ENCODE measurements at regions of chr3 and their contacts with region 1.

Region 1: DNA sequence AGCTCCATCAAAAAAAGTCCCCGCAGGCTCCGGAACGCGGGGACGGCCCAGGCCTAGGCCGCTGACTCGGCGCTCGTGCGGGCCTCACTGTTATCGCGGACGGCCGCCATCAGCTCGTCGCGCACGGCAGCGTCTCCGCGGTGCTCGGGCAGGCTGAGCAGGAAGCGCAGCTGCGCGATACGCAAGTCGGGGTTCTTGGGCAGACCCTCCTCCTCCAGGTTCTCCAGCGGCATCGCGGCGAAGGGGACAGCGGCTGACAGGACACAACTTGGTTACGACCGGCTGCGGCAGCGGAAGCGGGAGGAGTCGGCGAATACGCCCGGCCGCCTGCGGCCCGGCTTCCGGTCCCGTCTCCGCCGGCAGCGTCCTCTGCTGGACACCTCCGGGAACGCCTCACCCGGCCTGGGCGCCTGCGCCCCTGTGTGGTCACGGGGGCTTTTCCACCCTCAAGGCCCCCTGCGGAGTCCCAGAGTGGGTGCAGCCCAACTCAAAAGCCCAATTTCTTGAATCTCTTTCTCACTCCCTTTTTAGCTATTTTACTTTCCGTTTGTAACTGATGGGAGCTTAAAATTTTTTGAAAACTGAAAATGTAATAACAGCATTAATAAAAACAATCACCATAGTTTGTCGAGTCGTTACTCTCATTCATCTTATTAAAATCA is at the start of gene PSMD6:
- DNase-seq: peak; percentile 92
- H3K4me3 Mint-ChIP-seq: peak within 1 kb of the TSS; percentile 85
- H3K27ac Mint-ChIP-seq: peak within 1 kb of the TSS; percentile 83
- H3K4me1 Mint-ChIP-seq: peaks cover 36% of the 10 kb centered on the region
- H3K27me3 Mint-ChIP-seq: peaks cover 5% of the 10 kb centered on the region
- total RNA-seq, gene PSMD6: 101 to 103 TPM

Region 2: DNA sequence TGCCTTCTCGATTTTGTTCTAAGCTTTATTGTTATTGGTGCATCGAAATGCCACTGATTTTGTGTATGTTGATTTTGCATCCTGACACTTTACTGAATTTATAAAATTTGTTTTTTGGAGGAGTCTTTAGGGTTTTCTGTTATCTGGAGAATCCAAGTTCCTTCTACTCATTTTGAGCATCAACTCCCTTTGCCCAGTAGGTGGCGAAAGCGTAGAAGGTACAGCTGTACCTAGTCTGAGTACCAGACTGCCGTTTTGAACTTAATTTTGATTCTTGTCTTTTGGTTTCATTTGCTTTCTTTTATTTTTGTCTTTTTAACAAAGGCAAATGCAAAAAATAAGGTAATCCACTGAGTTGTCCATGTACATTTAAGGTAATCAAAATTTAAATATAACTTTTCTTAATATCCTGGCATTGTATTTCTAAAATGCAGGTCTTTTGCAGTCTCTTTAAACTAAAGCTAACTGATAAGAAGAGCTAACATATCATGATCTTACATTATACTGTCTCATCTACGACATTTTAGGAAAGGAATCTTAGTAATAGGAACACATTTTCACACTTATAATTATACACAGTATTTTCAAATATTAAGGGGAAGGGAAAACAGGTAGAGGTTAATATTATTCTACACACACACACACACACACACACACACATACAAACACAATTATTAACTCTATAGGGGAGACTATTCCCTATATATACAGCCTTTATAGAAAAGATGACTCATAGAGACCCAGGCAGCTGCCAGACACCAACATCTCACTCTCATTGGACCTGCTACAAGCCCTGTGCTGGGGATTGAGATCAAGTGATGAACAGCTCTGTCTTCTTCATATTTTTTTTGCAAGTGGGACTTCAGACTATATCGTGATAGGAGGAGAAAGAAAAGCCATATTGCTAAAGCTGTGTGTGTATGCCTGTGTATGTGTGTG is 673.5 kb before region 1 on chr3:
- CTCF ChIA-PET with region 1: no interaction called
- intact Hi-C with region 1: loop called (anchors 2 kb)
- DNase-seq: peak; percentile 64
- H3K4me3 Mint-ChIP-seq: no peak overlapping the region
- H3K27ac Mint-ChIP-seq: no peak overlapping the region
- H3K4me1 Mint-ChIP-seq: no peaks in the 10 kb centered on the region
- H3K27me3 Mint-ChIP-seq: peaks cover 32% of the 10 kb centered on the region

Region 3: DNA sequence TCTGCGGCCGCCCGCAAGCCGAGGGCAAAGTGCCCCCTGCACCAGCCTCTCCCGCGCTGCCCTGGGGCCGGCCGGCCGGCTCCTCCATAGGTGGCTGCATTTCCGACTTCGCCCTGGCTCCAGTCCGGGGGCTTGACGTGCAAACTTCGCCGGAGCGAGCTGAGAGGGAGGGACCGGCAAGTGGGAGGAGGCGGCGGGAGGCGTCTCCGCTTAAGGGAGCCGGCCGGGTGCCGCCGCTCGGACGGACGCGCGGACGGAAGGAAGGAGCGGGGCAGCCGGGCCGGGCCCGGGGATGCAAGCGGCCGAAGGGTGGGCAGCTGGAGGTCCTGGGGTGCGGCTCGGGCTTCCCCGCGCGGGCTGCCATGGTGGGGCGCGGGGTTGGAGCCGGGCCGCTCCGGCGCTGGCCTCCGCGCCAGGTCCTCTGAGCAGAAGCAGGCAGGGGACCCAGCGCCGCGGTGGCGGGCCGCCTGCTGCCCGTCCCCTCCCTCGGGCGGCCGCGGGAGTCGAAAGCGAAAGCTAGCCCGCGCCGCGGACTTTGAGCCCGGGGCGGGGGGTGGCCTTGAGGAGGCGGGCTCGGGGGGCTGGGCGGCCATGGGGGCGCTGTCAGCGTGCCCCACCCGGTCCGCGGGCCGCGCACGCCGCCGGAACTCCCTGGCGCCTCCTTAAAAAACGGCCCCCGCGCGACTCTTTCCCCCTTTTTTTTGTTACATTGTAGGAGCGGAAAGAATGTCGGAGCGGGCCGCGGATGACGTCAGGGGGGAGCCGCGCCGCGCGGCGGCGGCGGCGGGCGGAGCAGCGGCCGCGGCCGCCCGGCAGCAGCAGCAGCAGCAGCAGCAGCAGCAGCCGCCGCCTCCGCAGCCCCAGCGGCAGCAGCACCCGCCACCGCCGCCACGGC is 111.2 kb before region 1 on chr3 and contains the start of gene SCAANT1:
- CTCF ChIA-PET with region 1: no interaction called
- intact Hi-C with region 1: loop called (anchors 1 kb)
- DNase-seq: peak; percentile 78
- H3K4me3 Mint-ChIP-seq: peak within 1 kb of the TSS; percentile 87
- H3K27ac Mint-ChIP-seq: peak within 1 kb of the TSS; percentile 93
- H3K4me1 Mint-ChIP-seq: peaks cover 38% of the 10 kb centered on the region
- H3K27me3 Mint-ChIP-seq: no peaks in the 10 kb centered on the region
- total RNA-seq, gene SCAANT1: not detected

Region 4: GRCh38 chr3:63967675-63968611 is 55.4 kb before region 1 on chr3:
- CTCF ChIA-PET with region 1: interaction called, 4 read pairs
- intact Hi-C with region 1: loop called (anchors 1 kb)
- DNase-seq: peak; percentile 48
- H3K4me3 Mint-ChIP-seq: peak overlapping the region; percentile 78
- H3K27ac Mint-ChIP-seq: peak overlapping the region; percentile 93
- H3K4me1 Mint-ChIP-seq: peaks cover 72% of the 10 kb centered on the region
- H3K27me3 Mint-ChIP-seq: no peaks in the 10 kb centered on the region

Region 5: DNA sequence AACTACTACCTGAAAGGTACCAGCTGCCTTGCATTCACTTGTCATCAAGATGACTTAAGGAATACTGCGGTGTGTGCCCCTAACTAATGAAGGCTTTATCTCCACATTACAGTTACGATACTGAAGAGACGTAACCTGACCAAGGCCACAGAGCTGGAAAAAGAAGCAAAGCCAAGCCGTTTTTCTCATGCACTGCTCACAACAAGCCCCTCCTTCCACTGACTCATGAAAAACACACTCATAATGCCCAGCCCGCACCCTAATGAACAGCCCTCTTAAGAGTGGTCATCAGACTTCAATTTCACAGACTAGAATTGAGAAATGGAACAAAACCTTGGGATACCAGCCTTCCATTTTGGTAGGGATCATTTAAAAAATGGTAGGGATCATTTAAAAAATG is 11.6 kb before region 1 on chr3:
- CTCF ChIA-PET with region 1: interaction called, 11 read pairs
- intact Hi-C with region 1: loop called (anchors 1 kb)
- DNase-seq: no peak
- H3K4me3 Mint-ChIP-seq: no peak overlapping the region
- H3K27ac Mint-ChIP-seq: peak overlapping the region; percentile 14
- H3K4me1 Mint-ChIP-seq: peaks cover 38% of the 10 kb centered on the region
- H3K27me3 Mint-ChIP-seq: no peaks in the 10 kb centered on the region

Region 6: DNA sequence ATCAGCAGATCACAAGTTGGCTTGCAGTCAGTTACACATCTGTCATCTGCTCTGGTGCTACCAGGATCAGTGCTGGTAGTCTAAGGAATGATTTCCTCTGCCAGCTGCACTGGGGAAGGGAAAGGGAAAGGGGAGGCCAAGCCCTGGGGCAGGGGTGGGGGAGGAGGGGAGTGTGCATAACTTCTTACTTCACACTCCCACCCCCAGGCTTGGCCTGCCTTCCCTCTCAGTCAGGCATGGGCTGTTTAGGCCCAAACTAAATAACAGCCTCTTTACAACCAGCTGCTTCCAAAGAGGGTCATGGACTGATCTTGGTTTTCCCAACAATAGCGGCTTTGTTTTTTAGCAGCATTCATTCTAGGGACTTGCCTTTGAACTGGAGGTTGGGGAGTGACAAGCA is 86.1 kb after region 1 on chr3:
- CTCF ChIA-PET with region 1: no interaction called
- intact Hi-C with region 1: no loop called
- DNase-seq: no peak
- H3K4me3 Mint-ChIP-seq: no peak overlapping the region
- H3K27ac Mint-ChIP-seq: no peak overlapping the region
- H3K4me1 Mint-ChIP-seq: no peaks in the 10 kb centered on the region
- H3K27me3 Mint-ChIP-seq: peaks cover 17% of the 10 kb centered on the region

Measured in activated naive CD4-positive, alpha-beta T cell treated with anti-CD3 and anti-CD28 coated beads for 36 hours (primary cell).